H1 (cell line): ENCODE measurements at regions of chr4 and their contacts with region 1.

Region 1: GRCh38 chr4:3009422-3009821 is 46.1 kb downstream of the GRK4 start:
- DNase-seq: no peak
- H3K4me3 ChIP-seq: no peak overlapping the region
- H3K27ac ChIP-seq: no peak overlapping the region
- H3K4me1 ChIP-seq: no peaks in the 10 kb centered on the region
- H3K27me3 ChIP-seq: no peaks in the 10 kb centered on the region
- CTCF ChIP-seq: peak; percentile 31 to 48 (median 37); a peak in 3 of 4 replicates
- EP300 ChIP-seq: no peak
- POLR2A ChIP-seq: no peak
- RAD21 ChIP-seq: peak; percentile 49 to 51; a peak in 3 of 4 replicates

Region 2: GRCh38 chr4:2825740-2826139 is 183.7 kb before region 1 on chr4:
- CTCF ChIA-PET with region 1: no interaction called
- POLR2A ChIA-PET with region 1: no interaction called
- DNase-seq: no peak
- H3K4me3 ChIP-seq: no peak overlapping the region
- H3K27ac ChIP-seq: no peak overlapping the region
- H3K4me1 ChIP-seq: no peaks in the 10 kb centered on the region; a peak in 1 of 7 replicates
- H3K27me3 ChIP-seq: no peaks in the 10 kb centered on the region
- CTCF ChIP-seq: no peak
- EP300 ChIP-seq: no peak
- POLR2A ChIP-seq: no peak
- RAD21 ChIP-seq: 0 out of 4 replicates have a peak, but pooled peaks of 1 of the 2 experiments have one; percentile 4

Region 3: GRCh38 chr4:2946812-2947600 is 62.4 kb before region 1 on chr4:
- CTCF ChIA-PET with region 1: no interaction called
- POLR2A ChIA-PET with region 1: no interaction called
- DNase-seq: no peak
- H3K4me3 ChIP-seq: no peak overlapping the region
- H3K27ac ChIP-seq: no peak overlapping the region
- H3K4me1 ChIP-seq: no peaks in the 10 kb centered on the region
- H3K27me3 ChIP-seq: no peaks in the 10 kb centered on the region
- CTCF ChIP-seq: no peak
- EP300 ChIP-seq: no peak
- POLR2A ChIP-seq: no peak
- RAD21 ChIP-seq: no peak

Region 4: DNA sequence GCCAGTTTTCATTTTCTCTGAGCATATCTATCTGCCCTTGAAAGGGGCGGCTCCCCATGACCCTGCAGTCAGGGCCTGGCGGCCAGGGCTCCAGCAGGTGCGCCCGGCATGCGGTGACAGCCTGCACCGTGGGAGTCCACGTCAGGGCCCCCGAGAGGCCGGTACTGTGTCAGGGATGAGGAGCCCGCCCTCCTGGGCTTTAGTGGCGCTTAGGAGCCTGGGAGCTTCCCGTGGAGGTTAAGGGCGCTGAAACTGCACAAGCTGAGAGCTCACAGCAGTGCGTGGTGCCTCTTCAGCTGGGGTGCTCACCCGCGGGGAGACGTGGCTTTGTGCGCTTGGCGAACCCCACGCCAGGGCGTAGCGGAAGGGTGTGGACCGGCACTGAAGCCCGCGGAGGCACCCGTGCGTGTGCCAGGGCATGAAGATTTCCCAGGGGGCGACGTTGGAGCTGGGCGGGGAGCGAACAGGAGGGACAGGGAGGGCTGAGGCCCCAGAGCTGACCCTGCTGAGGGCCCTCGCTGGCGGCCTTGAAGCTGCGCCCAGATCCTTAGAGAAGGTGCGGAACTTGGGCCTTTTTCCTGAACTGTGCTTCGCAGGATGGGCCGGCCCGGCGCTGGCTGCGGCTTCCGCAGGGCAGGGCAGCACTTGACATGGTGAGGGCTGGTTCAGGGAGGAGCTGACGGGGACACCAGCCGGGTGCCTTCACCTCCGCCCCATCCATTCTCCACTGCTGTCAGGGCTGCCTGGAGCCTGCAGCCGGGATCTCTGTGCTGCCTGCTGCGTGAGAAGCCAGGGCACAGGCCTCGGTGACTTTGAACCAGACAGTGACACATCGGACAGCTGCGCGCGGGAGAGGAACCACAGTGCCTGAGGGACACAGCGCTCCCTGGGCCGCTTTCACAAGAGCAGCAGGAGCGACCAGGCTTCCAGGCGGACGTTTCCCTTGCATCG is 32.0 kb after region 1 on chr4:
- CTCF ChIA-PET with region 1: interaction called, 89 read pairs
- POLR2A ChIA-PET with region 1: no interaction called
- DNase-seq: peak in 1 of 2 experiments; percentile 64
- H3K4me3 ChIP-seq: 0 out of 8 replicates have a peak overlapping the region, but pooled peaks of 1 of the 4 experiments have one; percentile 2
- H3K27ac ChIP-seq: no peak overlapping the region
- H3K4me1 ChIP-seq: peaks cover 0 to 5% (median 0%) of the 10 kb centered on the region in 4 experiments; a peak in 4 of 7 replicates
- H3K27me3 ChIP-seq: peaks cover 0 to 7% (median 2%) of the 10 kb centered on the region in 4 experiments; a peak in 2 of 7 replicates
- CTCF ChIP-seq: peak in 2 of 3 experiments; percentile 5 to 8; a peak in 1 of 4 replicates
- EP300 ChIP-seq: no peak
- POLR2A ChIP-seq: no peak
- RAD21 ChIP-seq: no peak